ENCODE measurements at regions of chr17 and their contacts with region 1.

Region 1: DNA sequence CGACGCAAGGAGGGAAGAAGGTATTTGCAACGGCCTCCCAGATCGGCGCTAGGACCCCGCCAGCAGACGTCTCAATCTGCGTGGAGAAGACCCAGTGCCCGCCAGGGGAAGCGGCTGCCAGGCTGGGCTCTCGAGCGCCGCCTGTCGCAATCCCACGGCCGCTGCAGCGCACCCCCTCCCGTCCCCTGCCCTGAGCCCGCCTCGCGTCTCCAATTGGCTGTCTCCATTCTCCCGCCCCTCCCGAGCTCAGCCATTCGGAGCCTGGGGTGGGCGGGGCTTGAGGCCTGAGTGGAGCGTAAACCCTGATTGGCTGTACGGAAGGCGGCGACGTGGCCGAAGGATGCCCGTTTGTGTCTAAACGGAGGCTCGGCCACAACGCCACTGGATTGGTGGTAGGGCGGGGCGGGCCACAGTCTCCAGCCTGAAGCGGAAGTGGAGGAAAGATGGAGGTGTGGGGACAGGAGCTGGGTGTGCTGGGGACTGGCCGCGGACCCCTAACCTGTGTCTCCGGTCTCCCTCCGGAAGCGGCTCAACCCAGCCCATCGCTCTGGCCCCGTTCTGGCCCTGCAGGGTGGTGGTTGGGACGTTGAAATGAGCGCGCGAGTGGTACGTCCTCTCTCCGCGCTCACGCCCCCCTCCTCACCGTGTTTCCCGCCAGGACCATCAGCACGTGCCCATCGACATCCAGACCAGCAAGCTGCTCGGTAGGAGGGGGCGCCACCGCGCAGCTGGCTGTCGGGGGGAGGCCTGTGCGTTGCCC is at the start of gene CDK5RAP3:
- DNase-seq: peak; percentile 99 to 100 (median 100)
- H3K4me3 ChIP-seq: peak within 1 kb of the TSS; percentile 66 to 99 (median 92)
- H3K27ac ChIP-seq: peak within 1 kb of the TSS in 57 of 59 donors; percentile 29 to 92 (median 79)
- H3K27me3 ChIP-seq: no peaks in the 10 kb centered on the region
- CTCF ChIP-seq: peak; percentile 92 to 100 (median 98)
- total RNA-seq, gene CDK5RAP3: 99.4 to 256 (median 180) TPM

Region 2: DNA sequence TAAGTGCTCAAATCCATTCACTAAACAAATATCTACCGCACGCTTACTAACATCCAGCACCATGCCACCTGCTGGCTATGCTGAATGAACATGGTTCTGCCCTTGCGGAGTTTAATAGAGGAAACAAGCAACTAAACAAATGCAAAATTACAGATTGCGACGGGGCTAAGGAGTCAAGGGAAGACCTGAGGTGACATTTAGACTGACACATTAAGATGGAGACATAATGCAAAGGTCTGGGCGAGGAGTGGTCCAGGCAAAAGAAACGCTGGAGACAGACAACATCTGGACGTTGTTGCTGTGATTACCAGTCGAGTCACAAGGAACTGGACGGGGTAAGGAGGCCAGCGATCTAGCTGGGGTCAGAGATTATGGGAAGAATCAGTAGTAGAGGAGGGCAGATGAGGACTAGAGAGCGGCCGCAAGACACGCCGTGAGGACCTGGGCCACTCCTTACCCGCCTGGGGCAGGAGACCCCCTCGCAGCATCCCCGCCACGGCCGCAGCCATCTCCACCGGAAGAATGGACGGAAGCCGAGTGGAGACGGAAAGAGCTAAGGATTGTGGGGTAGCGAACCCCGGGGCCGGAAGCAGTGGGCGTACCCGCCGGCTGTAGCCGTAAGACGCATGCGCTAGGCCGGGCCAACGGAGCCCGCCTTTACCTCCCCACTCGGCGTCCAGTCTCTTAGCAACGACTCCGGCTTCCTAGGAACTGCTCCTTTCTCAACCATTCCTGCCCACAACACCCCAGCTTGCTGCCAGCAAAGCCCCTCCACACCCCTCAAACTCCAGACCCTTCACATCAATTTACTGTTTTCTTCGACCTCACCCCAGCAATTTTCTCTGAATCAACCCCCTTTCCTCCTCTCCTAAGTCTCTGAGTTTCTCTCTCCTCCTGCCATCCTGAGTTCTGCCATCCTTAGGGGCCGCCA is 139.6 kb before region 1 on chr17 and contains the starts of genes LRRC46 and MRPL10:
- intact Hi-C with region 1: loop called in 1 of 2 experiments (anchors 10 kb)
- DNase-seq: peak; percentile 83 to 93 (median 86)
- H3K4me3 ChIP-seq: peak within 1 kb of the TSS; percentile 62 to 99 (median 87)
- H3K27ac ChIP-seq: peak within 1 kb of the TSS in 54 of 59 donors; percentile 8 to 91 (median 72)
- H3K27me3 ChIP-seq: no peaks in the 10 kb centered on the region
- CTCF ChIP-seq: peak in 48 of 56 donors; percentile 6 to 67 (median 32)
- total RNA-seq, gene LRRC46: 0.26 to 1.8 (median 0.75) TPM in 76 of 120 experiments, not detected in the others
- total RNA-seq, gene MRPL10: 26.3 to 47.8 (median 35.6) TPM

Region 3: GRCh38 chr17:47840740-47841603 is 129.9 kb before region 1 on chr17 and contains the start of gene SCRN2:
- intact Hi-C with region 1: loop called (anchors 2 to 10 kb)
- DNase-seq: peak; percentile 78 to 93 (median 86)
- H3K4me3 ChIP-seq: peak within 1 kb of the TSS; percentile 53 to 97 (median 80)
- H3K27ac ChIP-seq: peak within 1 kb of the TSS in 54 of 59 donors; percentile 1 to 88 (median 66)
- H3K27me3 ChIP-seq: peaks cover 0 to 16% (median under 1%) of the 10 kb centered on the region in 45 donors
- CTCF ChIP-seq: peak; percentile 75 to 99 (median 96)
- total RNA-seq, gene SCRN2: 18.1 to 42.2 (median 27.6) TPM

Region 4: GRCh38 chr17:47895856-47896671 is 74.8 kb before region 1 on chr17 and contains the start of gene SP2:
- intact Hi-C with region 1: loop called (anchors 2 to 5 kb)
- DNase-seq: peak; percentile 94 to 99 (median 98)
- H3K4me3 ChIP-seq: peak within 1 kb of the TSS; percentile 66 to 100 (median 92)
- H3K27ac ChIP-seq: peak within 1 kb of the TSS; percentile 96 to 100 (median 100)
- H3K27me3 ChIP-seq: no peaks in the 10 kb centered on the region
- CTCF ChIP-seq: peak in 44 of 56 donors; percentile 8 to 59 (median 31)
- total RNA-seq, gene SP2: 11.5 to 27.4 (median 17.6) TPM

Region 5: GRCh38 chr17:47907932-47908562 is 62.8 kb before region 1 on chr17:
- intact Hi-C with region 1: no loop called
- DNase-seq: peak in 1 of 10 donors; percentile 29
- H3K4me3 ChIP-seq: peak overlapping the region in 33 of 59 donors; percentile 1 to 48 (median 20)
- H3K27ac ChIP-seq: peak overlapping the region in 49 of 59 donors; percentile 3 to 95 (median 61)
- H3K27me3 ChIP-seq: no peaks in the 10 kb centered on the region
- CTCF ChIP-seq: no peak

Region 6: GRCh38 chr17:47941236-47941994 is 29.5 kb before region 1 on chr17 and contains the start of gene PNPO:
- intact Hi-C with region 1: loop called in 1 of 2 experiments (anchors 2 kb)
- DNase-seq: peak; percentile 79 to 98 (median 96)
- H3K4me3 ChIP-seq: peak within 1 kb of the TSS; percentile 68 to 100 (median 90)
- H3K27ac ChIP-seq: peak within 1 kb of the TSS in 56 of 59 donors; percentile 32 to 93 (median 79)
- H3K27me3 ChIP-seq: no peaks in the 10 kb centered on the region
- CTCF ChIP-seq: peak in 37 of 56 donors; percentile 5 to 58 (median 28)
- total RNA-seq, gene PNPO: 30.2 to 62.6 (median 43.4) TPM

Region 7: DNA sequence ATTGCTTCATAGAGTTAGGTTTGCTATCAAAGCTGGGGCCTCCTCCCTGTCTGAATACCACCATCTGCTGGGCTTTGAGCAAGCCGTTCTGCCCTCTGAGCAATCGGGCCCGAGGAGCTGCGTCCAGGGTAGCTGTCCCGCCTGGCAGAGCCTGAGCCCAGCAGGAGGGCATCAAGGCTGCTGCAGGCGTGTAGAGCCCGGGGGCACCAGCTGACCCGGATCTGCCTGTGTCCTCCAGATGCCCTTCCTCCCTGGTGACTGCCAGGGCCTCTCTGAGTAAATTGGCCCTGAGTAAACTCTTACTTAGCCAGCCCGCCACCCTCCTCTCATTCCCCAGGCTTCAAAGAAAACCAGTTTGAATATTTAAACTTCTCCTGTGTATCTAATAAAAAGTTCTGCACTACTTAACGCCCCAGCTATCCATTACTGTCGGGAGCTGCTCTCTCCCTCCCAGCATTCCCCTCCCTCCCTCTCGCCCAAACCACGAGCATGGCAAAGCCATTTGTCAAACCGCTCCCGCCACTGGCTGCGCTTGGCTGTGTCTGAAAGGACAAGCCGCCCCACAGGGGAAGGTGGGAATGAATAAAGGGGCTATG is 16.5 kb after region 1 on chr17:
- intact Hi-C with region 1: no loop called
- DNase-seq: peak in 1 of 10 donors; percentile 41
- H3K4me3 ChIP-seq: peak overlapping the region in 1 of 59 donors; percentile 1
- H3K27ac ChIP-seq: peak overlapping the region in 12 of 59 donors; percentile 2 to 58 (median 28)
- H3K27me3 ChIP-seq: no peaks in the 10 kb centered on the region
- CTCF ChIP-seq: no peak

Region 8: GRCh38 chr17:48074315-48075081 is 103.6 kb after region 1 on chr17:
- intact Hi-C with region 1: loop called in 1 of 2 experiments (anchors 10 kb)
- DNase-seq: peak in 6 of 10 donors; percentile 37 to 90 (median 68)
- H3K4me3 ChIP-seq: no peak overlapping the region
- H3K27ac ChIP-seq: peak overlapping the region in 23 of 59 donors; percentile 7 to 67 (median 27)
- H3K27me3 ChIP-seq: no peaks in the 10 kb centered on the region
- CTCF ChIP-seq: peak; percentile 66 to 95 (median 86)

Measured in dorsolateral prefrontal cortex (tissue), 120 donors.